Aorta (tissue), 5 donors: ENCODE measurements at regions of chr7 and their contacts with region 1.

Region 1: GRCh38 chr7:105141068-105141467 is 127.1 kb downstream of the KMT2E start:
- DNase-seq: no peak
- ATAC-seq: no peak
- H3K4me3 ChIP-seq: no peak overlapping the region
- H3K27ac ChIP-seq: no peak overlapping the region
- H3K4me1 ChIP-seq: no peaks in the 10 kb centered on the region
- H3K27me3 ChIP-seq: no peaks in the 10 kb centered on the region

Region 2: DNA sequence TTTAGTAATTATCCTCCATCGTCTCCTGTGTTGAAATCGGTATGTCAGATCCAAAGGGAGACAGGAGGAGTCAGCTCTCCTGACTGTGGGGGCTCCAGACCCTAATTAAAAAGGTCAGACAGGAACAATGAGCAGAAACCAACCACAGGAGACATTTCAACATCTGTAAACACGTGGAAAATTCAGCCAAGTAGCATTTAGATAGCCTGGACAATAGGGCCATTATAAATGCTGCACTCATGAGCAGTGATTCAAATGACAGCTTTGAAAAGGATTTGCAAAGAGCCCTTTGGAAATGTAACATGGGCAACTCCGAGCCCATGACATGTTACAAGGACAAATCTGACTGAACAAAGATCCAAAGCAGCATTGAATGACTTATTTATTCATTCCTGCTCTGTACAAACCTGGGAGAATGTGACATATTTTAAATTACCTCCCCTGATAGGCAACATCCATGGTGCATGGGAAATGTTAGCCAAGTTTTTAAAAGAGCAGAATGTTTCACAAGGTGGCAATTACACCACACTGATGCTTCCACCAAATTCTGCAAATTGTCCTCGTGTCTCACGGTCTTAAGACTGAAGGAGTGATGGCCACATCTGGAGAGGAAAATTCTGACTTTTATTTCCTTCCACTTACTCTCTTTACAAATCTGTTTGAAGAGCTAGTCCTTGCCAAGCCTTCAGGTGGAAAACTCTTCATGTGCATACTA is 240.4 kb before region 1 on chr7:
- intact Hi-C with region 1: no loop called
- DNase-seq: no peak
- ATAC-seq: no peak
- H3K4me3 ChIP-seq: no peak overlapping the region
- H3K27ac ChIP-seq: no peak overlapping the region
- H3K4me1 ChIP-seq: no peaks in the 10 kb centered on the region
- H3K27me3 ChIP-seq: no peaks in the 10 kb centered on the region

Region 3: GRCh38 chr7:105352018-105352612 is 211.0 kb after region 1 on chr7:
- intact Hi-C with region 1: loop called in 1 of 2 experiments (anchors 10 kb)
- DNase-seq: peak; percentile 81 to 85
- ATAC-seq: peak; percentile 89
- H3K4me3 ChIP-seq: no peak overlapping the region
- H3K27ac ChIP-seq: no peak overlapping the region
- H3K4me1 ChIP-seq: peaks cover 0 to 3% of the 10 kb centered on the region in 2 donors
- H3K27me3 ChIP-seq: no peaks in the 10 kb centered on the region